ENCODE measurements at regions of chr13 and their contacts with region 1.

Region 1: DNA sequence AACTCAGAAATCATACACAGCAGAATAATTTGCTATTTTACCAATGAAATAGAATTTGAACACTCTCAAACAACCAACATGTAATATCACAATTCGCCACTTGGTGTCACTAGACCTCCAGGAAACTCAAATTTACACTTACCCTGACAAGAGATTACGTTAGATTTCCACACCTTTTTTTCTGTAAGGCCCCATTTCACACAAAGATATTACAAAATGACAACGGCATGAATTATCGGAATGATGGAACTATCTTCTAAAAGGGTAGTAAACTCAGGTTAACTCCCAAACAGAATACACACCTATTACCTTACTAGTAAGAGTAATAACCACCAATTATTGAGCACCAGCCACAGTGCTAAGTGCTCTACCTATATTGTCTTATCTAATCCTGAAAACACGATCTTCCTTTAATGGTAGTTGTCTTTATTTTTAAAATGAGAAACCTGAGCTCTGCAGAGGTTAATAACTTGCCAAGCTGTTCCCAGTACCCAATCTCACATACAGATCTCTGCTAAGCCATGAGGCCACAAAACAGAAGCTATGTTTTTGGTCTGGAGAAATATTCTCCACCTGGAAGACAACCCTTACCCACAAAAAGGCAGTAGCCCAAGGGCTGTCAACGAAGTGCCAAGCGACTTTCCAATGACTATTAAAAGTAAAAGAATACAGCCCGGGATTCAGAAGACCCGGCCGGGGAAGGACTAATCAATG is 152.4 kb downstream of the DCLK1 start:
- DNase-seq: peak; percentile 46
- H3K27ac ChIP-seq: peak overlapping the region; percentile 69
- CTCF ChIP-seq: peak; percentile 75

Region 2: DNA sequence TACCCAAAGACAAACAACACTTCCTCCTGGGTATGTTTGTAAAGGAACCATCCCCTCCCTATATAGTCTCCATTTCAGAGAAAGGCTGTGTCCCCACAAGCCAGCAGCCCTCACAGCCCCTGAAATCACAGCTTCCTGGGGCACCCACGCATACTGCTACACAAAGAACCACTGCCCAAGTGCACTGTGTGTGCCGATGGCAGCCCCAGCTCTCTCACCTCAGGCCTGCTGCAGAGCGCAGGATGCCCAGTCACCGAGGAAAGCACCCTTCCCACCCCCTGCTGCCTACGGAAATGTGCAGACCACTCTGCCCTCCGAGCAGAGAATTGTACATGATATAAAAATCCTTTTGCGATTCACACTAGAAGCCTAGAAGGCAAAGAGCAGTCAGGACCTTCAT is 196.2 kb after region 1 on chr13:
- CTCF ChIA-PET with region 1: no interaction called
- POLR2A ChIA-PET with region 1: no interaction called
- DNase-seq: no peak
- H3K27ac ChIP-seq: no peak overlapping the region
- CTCF ChIP-seq: no peak

Region 3: GRCh38 chr13:36275190-36276002 is 296.6 kb after region 1 on chr13:
- CTCF ChIA-PET with region 1: interaction called, 35 read pairs
- POLR2A ChIA-PET with region 1: interaction called, 3 read pairs
- DNase-seq: peak; percentile 29
- H3K27ac ChIP-seq: no peak overlapping the region
- CTCF ChIP-seq: peak; percentile 59